T-cell (primary cell): ENCODE measurements at regions of chr11 and their contacts with region 1.

Region 1: GRCh38 chr11:22787551-22788162 is 41.9 kb downstream of the SVIP start:
- DNase-seq: peak in 24 of 35 experiments; percentile 1 to 61 (median 10)
- ATAC-seq: peak in 3 of 4 experiments; percentile 35 to 52 (median 49)
- H3K4me3 ChIP-seq: no peak overlapping the region
- H3K4me3 Mint-ChIP-seq: no peak overlapping the region
- H3K27ac ChIP-seq: no peak overlapping the region
- H3K27ac Mint-ChIP-seq: no peak overlapping the region
- H3K4me1 ChIP-seq: no peaks in the 10 kb centered on the region
- H3K4me1 Mint-ChIP-seq: no peaks in the 10 kb centered on the region
- H3K27me3 ChIP-seq: no peaks in the 10 kb centered on the region
- H3K27me3 Mint-ChIP-seq: no peaks in the 10 kb centered on the region

Region 2: DNA sequence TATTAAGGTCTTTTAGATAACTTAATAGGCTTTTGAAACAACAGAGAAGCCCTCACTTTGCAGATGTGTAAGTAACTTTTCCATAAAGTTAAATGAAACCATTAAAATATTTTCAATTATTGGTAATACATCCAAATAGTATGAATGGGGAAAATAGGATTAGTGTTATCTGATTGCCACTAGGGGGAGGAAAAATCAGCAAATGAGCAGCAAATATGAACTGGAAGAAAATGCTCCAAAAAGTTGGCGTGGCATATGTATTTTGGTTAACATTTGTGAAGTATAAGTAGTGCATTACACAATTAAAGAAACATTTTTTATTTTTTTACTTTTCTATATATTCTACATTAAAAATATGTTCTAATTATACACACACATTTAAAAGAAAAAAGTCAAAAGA is 854.6 kb before region 1 on chr11:
- CTCF ChIA-PET with region 1: no interaction called
- POLR2A ChIA-PET with region 1: no interaction called
- DNase-seq: no peak
- ATAC-seq: no peak
- H3K4me3 ChIP-seq: no peak overlapping the region
- H3K4me3 Mint-ChIP-seq: no peak overlapping the region
- H3K27ac ChIP-seq: no peak overlapping the region
- H3K27ac Mint-ChIP-seq: no peak overlapping the region
- H3K4me1 ChIP-seq: no peaks in the 10 kb centered on the region
- H3K4me1 Mint-ChIP-seq: no peaks in the 10 kb centered on the region
- H3K27me3 ChIP-seq: no peaks in the 10 kb centered on the region
- H3K27me3 Mint-ChIP-seq: no peaks in the 10 kb centered on the region

Region 3: DNA sequence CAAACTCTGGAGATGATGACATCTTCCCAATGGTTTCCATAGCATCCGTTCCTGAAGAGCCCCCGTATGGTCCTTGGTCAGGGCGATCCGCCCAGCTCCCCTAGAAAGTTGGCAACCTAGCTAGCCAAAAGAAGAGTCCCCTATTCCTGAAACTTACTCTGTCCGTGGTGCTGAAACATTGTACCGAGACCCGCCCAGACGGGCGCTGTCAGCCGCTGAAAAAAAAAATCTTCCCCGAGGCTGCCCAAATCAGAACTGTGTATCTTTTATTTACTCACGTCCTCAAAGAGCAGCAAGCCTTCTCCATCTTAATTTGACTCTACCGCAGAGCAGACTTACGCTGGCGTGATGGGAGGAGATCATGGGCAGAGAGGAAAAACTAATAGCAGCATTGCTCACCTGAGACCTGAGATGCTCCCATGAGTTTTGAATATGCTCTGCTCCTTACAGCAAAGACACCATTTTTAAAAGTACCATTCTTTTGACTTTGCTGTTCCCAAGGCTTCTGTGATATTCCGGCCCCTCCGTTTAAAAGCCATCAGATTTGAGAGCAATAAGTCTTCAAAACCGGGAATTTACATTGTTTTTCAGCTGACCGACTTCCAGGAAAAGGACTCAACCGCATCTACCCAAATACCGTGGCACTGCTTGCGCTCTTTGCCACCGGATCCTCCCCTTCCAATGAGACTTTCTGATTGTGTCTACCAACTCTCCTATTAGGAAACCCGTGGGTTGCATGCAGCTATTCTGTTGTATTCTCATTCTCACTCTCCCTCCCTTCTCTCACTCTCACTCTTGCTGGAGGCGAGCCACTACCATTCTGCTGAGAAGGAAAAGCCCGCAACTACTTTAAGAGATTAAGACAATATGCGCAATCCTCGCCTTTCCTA is 449.8 kb before region 1 on chr11 and contains the start of gene SLC17A6:
- CTCF ChIA-PET with region 1: interaction called, 10 to 17 read pairs
- POLR2A ChIA-PET with region 1: no interaction called
- DNase-seq: peak in 1 of 35 experiments; percentile 22
- ATAC-seq: no peak
- H3K4me3 ChIP-seq: no peak within 1 kb of the TSS
- H3K4me3 Mint-ChIP-seq: no peak within 1 kb of the TSS
- H3K27ac ChIP-seq: no peak within 1 kb of the TSS
- H3K27ac Mint-ChIP-seq: peak within 1 kb of the TSS in 1 of 2 donors; percentile 44
- H3K4me1 ChIP-seq: peaks cover 0 to 2% of the 10 kb centered on the region in 2 experiments
- H3K4me1 Mint-ChIP-seq: peaks cover 10 to 18% (median 12%) of the 10 kb centered on the region in 3 donors
- H3K27me3 ChIP-seq: peaks cover 20 to 40% of the 10 kb centered on the region in 2 experiments
- H3K27me3 Mint-ChIP-seq: peaks cover 57% of the 10 kb centered on the region in 2 donors
- total RNA-seq, gene SLC17A6: not detected